Activated CD4-positive, alpha-beta T cell treated with anti-CD3 and anti-CD28 coated beads for 36 hours (primary cell): ENCODE measurements at regions of chr11 and their contacts with region 1.

Region 1: DNA sequence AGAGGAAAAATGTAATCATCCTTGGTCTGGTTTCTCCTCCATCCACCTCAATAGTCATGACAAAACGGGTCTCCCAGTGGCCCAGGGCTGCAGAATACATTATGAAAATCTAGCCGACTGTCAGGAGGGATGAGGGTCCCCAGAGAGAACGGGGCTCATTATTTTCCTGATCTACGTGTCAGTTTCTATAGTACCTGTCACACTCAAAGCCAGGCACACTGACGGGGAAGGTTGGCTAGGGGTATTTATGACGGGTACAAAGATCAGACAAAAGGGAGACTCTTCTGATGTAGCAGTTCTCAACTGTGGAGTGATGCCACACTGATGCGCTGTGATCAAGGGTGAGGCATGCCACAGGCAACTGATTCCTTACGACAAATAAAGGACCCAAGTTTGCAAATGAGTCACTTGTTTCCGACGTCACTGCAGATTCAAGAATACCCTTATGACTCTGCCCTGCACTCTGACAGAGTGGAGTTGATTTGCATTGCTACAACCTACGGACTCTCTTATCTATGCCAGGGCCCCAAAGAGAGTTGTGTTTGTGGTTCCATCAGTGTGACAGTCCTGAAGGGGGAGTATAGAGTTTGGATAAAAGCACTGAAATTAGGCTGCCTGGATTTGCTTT is 188.2 kb upstream of the TBCEL start:
- DNase-seq: peak; percentile 80
- ATAC-seq: peak; percentile 94
- H3K4me3 Mint-ChIP-seq: no peak overlapping the region
- H3K27ac Mint-ChIP-seq: no peak overlapping the region
- H3K4me1 Mint-ChIP-seq: peaks cover 22% of the 10 kb centered on the region
- H3K27me3 Mint-ChIP-seq: peaks cover 20% of the 10 kb centered on the region

Region 2: DNA sequence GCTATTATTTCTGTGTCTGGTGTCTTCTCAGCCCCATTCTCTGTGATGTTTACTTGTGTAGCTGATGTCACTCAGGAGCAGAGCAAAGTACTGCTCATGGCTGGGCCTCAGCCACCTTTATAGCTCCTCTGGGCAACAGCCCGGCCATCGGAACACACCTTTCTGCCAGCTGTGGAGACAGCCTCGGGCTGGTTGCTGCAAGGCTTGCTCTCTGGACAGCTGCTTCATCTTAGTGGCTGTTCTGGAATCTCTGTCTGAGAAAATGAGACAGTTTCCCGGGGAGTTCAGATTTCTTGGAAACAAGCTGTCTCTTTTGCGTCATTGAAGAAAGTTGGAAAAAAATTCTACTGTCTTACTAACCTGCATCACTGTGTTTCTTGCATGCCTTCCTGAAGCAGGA is 1432.7 kb before region 1 on chr11:
- CTCF ChIA-PET with region 1: no interaction called
- POLR2A ChIA-PET with region 1: no interaction called
- intact Hi-C with region 1: no loop called
- DNase-seq: no peak
- ATAC-seq: no peak
- H3K4me3 Mint-ChIP-seq: no peak overlapping the region
- H3K27ac Mint-ChIP-seq: no peak overlapping the region
- H3K4me1 Mint-ChIP-seq: no peaks in the 10 kb centered on the region
- H3K27me3 Mint-ChIP-seq: peaks cover 13% of the 10 kb centered on the region

Region 3: GRCh38 chr11:120564573-120565311 is 271.0 kb before region 1 on chr11:
- CTCF ChIA-PET with region 1: no interaction called
- POLR2A ChIA-PET with region 1: no interaction called
- intact Hi-C with region 1: loop called in 1 of 2 experiments (anchors 1 kb)
- DNase-seq: peak; percentile 76
- ATAC-seq: peak; percentile 74
- H3K4me3 Mint-ChIP-seq: no peak overlapping the region
- H3K27ac Mint-ChIP-seq: no peak overlapping the region
- H3K4me1 Mint-ChIP-seq: peaks cover 8% of the 10 kb centered on the region
- H3K27me3 Mint-ChIP-seq: peaks cover 37% of the 10 kb centered on the region